WTC11 (cell line): ENCODE measurements at regions of chr6 and their contacts with region 1.

Region 1: DNA sequence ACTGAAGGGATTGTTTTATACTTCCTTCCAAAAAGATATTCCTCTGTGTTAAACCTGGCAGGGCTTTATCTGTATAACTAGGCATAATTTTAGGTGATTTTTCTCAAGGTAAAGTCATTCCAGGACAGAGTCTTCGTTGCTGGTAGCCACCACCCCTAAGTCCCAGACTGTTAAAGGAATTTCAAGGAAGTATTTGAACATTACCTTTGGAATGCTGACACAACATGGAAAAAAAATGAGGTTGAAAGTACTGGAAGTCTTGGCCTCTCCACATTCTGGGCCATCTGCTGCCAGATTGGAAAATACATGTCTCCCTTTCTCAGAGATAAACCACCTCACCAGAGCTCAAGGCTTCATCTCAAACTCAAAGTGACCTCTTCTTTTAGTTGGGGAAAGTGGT is 27.0 kb upstream of the ETV7 start:
- DNase-seq: no peak
- ATAC-seq: no peak
- H3K4me3 Mint-ChIP-seq: no peak overlapping the region
- H3K27ac Mint-ChIP-seq: no peak overlapping the region
- H3K4me1 Mint-ChIP-seq: no peaks in the 10 kb centered on the region
- H3K27me3 Mint-ChIP-seq: peaks cover 3% of the 10 kb centered on the region
- CTCF ChIP-seq: no peak

Region 2: GRCh38 chr6:36224904-36225461 is 189.5 kb before region 1 on chr6:
- CTCF ChIA-PET with region 1: no interaction called
- POLR2A ChIA-PET with region 1: no interaction called
- DNase-seq: no peak
- ATAC-seq: no peak
- H3K4me3 Mint-ChIP-seq: no peak overlapping the region
- H3K27ac Mint-ChIP-seq: no peak overlapping the region
- H3K4me1 Mint-ChIP-seq: no peaks in the 10 kb centered on the region
- H3K27me3 Mint-ChIP-seq: no peaks in the 10 kb centered on the region
- CTCF ChIP-seq: no peak

Region 3: DNA sequence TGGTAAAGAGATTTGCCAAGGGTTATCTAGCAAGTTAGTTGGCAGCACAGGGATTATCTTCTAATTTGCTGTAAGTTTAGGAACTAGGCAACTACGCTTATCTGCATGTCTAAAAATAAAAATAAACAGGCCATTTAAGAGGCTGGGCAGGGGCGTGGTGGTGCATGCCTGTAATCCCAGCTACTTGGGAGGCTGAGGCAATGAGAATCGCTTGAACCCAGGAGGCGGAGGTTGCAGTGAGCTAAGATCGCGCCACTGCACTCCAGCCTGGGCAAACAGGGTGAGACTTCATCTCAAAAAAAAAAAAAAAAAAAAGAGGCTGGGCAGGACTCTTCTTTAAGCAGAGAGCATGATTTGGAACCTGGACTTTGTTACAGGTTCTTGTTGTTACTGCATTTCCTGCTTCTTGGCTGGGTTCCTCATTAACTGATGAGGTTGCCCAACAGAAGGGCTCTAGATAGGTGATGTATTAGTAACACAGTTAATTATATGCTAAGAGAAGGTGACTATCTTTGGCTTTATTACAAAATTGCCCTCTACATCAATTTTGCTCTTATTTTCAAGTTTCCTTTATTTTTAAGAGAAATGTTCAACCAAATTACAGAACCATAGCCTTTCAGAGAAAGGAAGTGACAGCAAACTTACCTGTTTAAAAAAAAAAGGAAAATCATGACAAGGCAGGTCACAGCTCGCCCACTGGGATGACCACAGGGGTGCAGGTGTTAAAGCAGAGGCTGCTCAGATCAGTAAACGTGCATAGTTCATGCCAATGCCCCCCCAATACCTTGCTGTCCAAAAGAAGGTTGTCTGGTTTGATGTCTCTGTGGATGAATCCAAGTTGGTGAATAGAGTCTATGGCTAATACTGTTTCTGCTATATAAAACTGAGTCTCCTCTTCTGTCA is 100.3 kb after region 1 on chr6:
- CTCF ChIA-PET with region 1: no interaction called
- POLR2A ChIA-PET with region 1: interaction called, 10 read pairs
- DNase-seq: no peak
- ATAC-seq: no peak
- H3K4me3 Mint-ChIP-seq: no peak overlapping the region
- H3K27ac Mint-ChIP-seq: no peak overlapping the region
- H3K4me1 Mint-ChIP-seq: no peaks in the 10 kb centered on the region
- H3K27me3 Mint-ChIP-seq: no peaks in the 10 kb centered on the region
- CTCF ChIP-seq: no peak